Naive thymus-derived CD4-positive, alpha-beta T cell (primary cell): ENCODE measurements at regions of chr19 and their contacts with region 1.

Region 1: DNA sequence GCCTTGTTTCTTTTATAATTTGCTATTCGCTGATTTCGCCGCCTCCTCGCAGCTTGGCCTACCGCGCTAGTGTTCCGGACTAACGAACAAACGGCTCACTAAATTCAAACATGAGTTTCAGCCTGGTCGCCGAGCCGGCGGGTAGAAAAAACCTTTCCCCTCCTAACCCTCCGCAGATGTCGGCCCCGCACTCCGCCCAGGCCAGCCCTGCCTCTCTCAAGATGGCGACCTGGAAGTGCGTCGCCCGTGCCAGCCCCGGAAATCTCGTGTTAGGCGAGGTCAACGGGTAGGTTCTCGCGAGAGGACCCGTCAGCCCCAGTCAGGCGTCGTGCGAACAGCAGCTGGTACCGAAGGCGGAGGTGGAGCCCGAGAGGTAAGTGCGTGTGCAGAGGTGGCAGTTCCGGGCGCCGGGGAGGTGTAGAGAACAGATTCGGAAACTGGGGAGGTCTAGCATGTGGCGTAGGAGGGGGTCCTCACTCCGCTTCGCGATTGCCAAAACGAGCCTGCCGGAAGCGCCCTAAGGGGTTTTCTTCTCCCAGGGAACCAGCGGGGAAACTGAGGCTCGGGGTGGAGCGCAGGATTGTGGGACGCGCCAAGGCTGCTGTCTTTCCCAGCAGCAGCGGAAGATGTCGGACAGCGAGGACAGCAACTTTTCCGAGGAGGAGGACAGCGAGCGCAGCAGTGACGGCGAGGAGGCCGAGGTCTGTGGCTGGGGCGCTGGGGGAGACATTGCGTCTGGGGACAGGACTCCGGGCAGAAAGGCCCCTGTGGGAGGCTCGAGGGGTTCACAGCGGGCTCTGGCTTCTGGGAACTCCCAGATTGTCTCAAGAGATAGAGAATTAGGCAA is at the start of gene SUPT5H:
- DNase-seq: peak; percentile 84 to 99 (median 97)
- ATAC-seq: peak; percentile 96
- H3K4me3 ChIP-seq: peak within 1 kb of the TSS; percentile 77
- H3K4me3 Mint-ChIP-seq: peak within 1 kb of the TSS; percentile 91 to 100 (median 97)
- H3K27ac ChIP-seq: peak within 1 kb of the TSS; percentile 98
- H3K27ac Mint-ChIP-seq: peak within 1 kb of the TSS; percentile 95 to 100 (median 99)
- H3K4me1 ChIP-seq: peaks cover 35 to 47% of the 10 kb centered on the region in 2 donors
- H3K4me1 Mint-ChIP-seq: peaks cover 38 to 61% (median 48%) of the 10 kb centered on the region in 7 donors
- H3K27me3 ChIP-seq: no peaks in the 10 kb centered on the region
- H3K27me3 Mint-ChIP-seq: no peaks in the 10 kb centered on the region
- total RNA-seq, gene SUPT5H: 180 to 247 (median 203) TPM

Region 2: GRCh38 chr19:39319892-39320248 is 125.6 kb before region 1 on chr19:
- CTCF ChIA-PET with region 1: no interaction called
- POLR2A ChIA-PET with region 1: no interaction called
- intact Hi-C with region 1: no loop called
- DNase-seq: no peak
- ATAC-seq: no peak
- H3K4me3 ChIP-seq: peak overlapping the region; percentile 62
- H3K4me3 Mint-ChIP-seq: peak overlapping the region; percentile 67 to 89 (median 80)
- H3K27ac ChIP-seq: peak overlapping the region; percentile 70
- H3K27ac Mint-ChIP-seq: peak overlapping the region in 8 of 9 donors; percentile 48 to 91 (median 66)
- H3K4me1 ChIP-seq: peaks cover 9 to 10% of the 10 kb centered on the region in 2 donors
- H3K4me1 Mint-ChIP-seq: peaks cover 20 to 48% (median 30%) of the 10 kb centered on the region in 7 donors
- H3K27me3 ChIP-seq: no peaks in the 10 kb centered on the region
- H3K27me3 Mint-ChIP-seq: peaks cover 0 to 8% (median 0%) of the 10 kb centered on the region in 5 donors

Region 3: GRCh38 chr19:39412100-39412866 is 33.2 kb before region 1 on chr19 and contains the start of gene PLEKHG2:
- CTCF ChIA-PET with region 1: interaction called, 3 read pairs
- POLR2A ChIA-PET with region 1: interaction called, 12 read pairs
- intact Hi-C with region 1: loop called (anchors 1 kb)
- DNase-seq: peak; percentile 95 to 99 (median 99)
- ATAC-seq: peak; percentile 72
- H3K4me3 ChIP-seq: peak within 1 kb of the TSS; percentile 82
- H3K4me3 Mint-ChIP-seq: peak within 1 kb of the TSS; percentile 84 to 99 (median 92)
- H3K27ac ChIP-seq: peak within 1 kb of the TSS; percentile 100
- H3K27ac Mint-ChIP-seq: peak within 1 kb of the TSS; percentile 90 to 100 (median 97)
- H3K4me1 ChIP-seq: peaks cover 24 to 28% of the 10 kb centered on the region in 2 donors
- H3K4me1 Mint-ChIP-seq: peaks cover 24 to 49% (median 35%) of the 10 kb centered on the region in 7 donors
- H3K27me3 ChIP-seq: no peaks in the 10 kb centered on the region
- H3K27me3 Mint-ChIP-seq: peaks cover 0 to 3% (median 0%) of the 10 kb centered on the region in 5 donors
- total RNA-seq, gene PLEKHG2: 16.4 to 205 (median 58.2) TPM

Region 4: DNA sequence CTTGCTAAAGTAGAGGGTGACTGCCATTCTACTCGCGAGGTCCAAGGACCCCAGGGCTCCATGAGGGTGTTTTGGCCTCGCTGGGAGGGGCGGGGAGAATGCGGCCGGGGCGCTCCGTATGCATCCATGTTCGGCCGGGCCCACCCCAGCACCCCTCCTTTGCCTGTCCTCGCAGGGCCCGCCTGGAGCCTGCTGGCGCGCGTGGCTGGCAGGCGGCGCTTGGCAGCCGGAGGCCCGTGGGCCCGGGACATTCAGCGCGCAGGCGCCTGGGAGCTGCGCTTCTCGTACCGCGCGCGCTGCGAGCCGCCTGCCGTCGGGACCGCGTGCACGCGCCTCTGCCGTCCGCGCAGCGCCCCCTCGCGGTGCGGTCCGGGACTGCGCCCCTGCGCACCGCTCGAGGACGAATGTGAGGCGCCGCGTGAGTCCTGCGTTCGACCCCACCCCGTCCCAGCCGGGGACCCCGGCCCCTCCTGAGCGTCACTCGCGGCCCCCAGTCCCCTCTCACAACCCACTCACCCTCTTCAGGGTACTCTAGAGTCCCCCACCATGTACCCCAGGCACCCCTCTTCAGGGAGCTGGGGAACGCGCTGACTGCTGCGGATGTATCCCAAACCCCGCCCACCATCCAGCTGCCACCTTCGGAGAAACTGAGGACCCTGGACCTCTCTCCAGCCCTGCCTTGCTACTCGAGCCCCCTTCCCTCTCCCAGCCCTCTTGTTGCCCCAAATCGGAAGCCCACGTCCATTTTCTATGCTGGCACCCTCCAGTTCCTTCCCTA is 57.3 kb after region 1 on chr19:
- CTCF ChIA-PET with region 1: interaction called, 5 read pairs
- POLR2A ChIA-PET with region 1: interaction called, 3 read pairs
- intact Hi-C with region 1: loop called (anchors 1 kb)
- DNase-seq: peak; percentile 67 to 88 (median 78)
- ATAC-seq: peak; percentile 94
- H3K4me3 ChIP-seq: no peak overlapping the region
- H3K4me3 Mint-ChIP-seq: peak overlapping the region in 5 of 10 donors; percentile 4 to 48 (median 16)
- H3K27ac ChIP-seq: no peak overlapping the region
- H3K27ac Mint-ChIP-seq: peak overlapping the region in 3 of 9 donors; percentile 48 to 71 (median 66)
- H3K4me1 ChIP-seq: peaks cover 11 to 21% of the 10 kb centered on the region in 2 donors
- H3K4me1 Mint-ChIP-seq: peaks cover 26 to 38% (median 35%) of the 10 kb centered on the region in 7 donors
- H3K27me3 ChIP-seq: peaks cover 12 to 19% of the 10 kb centered on the region in 2 donors
- H3K27me3 Mint-ChIP-seq: peaks cover 55 to 73% (median 62%) of the 10 kb centered on the region in 5 donors

Region 5: DNA sequence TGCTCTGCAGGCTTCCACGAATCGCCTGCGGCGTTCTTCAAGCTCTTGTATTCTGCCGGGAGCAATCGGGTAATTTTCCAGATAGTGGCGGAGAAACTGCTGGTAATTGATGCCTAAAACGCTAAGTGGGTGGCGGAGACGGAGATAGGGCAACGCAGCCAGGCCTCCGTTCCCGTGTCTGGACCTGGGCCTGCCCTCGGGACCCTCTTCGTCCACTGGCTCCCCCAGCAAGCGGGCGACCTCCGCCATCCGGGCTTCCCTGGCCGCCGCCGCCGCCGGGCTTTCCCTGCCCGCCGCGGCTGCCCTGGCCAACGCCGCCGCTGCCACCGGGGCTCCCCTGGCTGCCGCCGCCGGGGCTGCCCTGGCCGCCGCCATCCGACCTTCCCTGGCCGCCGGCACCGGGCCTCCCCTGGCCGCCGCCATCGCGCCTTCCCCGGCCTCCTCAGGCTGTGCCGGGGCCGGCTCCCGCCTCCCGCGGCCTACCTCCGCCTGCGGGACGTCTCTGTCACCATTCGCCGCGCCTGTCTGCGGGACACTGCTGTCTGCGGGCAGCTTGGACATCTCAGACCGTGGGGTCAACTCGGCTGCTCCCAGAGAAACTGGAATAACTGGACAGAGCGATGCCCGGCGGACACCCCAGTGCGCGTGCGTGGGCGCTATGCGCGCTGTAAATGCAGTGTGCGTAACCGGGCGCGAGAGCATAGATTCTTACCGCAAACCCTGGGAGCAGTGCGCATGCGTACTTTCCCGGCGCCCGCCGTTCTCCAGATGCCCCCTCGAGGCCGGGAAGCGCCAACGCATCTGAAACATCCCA is 94.2 kb after region 1 on chr19 and contains the start of gene EID2:
- CTCF ChIA-PET with region 1: interaction called, 24 read pairs
- POLR2A ChIA-PET with region 1: interaction called, 17 read pairs
- intact Hi-C with region 1: loop called in 1 of 2 experiments (anchors 1 kb)
- DNase-seq: peak; percentile 90 to 95 (median 91)
- ATAC-seq: peak; percentile 96
- H3K4me3 ChIP-seq: peak within 1 kb of the TSS; percentile 94
- H3K4me3 Mint-ChIP-seq: peak within 1 kb of the TSS; percentile 95 to 98 (median 97)
- H3K27ac ChIP-seq: peak within 1 kb of the TSS; percentile 98
- H3K27ac Mint-ChIP-seq: peak within 1 kb of the TSS; percentile 94 to 99 (median 98)
- H3K4me1 ChIP-seq: peaks cover 16 to 21% of the 10 kb centered on the region in 2 donors
- H3K4me1 Mint-ChIP-seq: peaks cover 45 to 85% (median 68%) of the 10 kb centered on the region in 7 donors
- H3K27me3 ChIP-seq: no peaks in the 10 kb centered on the region
- H3K27me3 Mint-ChIP-seq: peaks cover 0 to 2% (median 0%) of the 10 kb centered on the region in 5 donors
- total RNA-seq, gene EID2: 12.2 to 29.1 (median 16.1) TPM

Region 6: DNA sequence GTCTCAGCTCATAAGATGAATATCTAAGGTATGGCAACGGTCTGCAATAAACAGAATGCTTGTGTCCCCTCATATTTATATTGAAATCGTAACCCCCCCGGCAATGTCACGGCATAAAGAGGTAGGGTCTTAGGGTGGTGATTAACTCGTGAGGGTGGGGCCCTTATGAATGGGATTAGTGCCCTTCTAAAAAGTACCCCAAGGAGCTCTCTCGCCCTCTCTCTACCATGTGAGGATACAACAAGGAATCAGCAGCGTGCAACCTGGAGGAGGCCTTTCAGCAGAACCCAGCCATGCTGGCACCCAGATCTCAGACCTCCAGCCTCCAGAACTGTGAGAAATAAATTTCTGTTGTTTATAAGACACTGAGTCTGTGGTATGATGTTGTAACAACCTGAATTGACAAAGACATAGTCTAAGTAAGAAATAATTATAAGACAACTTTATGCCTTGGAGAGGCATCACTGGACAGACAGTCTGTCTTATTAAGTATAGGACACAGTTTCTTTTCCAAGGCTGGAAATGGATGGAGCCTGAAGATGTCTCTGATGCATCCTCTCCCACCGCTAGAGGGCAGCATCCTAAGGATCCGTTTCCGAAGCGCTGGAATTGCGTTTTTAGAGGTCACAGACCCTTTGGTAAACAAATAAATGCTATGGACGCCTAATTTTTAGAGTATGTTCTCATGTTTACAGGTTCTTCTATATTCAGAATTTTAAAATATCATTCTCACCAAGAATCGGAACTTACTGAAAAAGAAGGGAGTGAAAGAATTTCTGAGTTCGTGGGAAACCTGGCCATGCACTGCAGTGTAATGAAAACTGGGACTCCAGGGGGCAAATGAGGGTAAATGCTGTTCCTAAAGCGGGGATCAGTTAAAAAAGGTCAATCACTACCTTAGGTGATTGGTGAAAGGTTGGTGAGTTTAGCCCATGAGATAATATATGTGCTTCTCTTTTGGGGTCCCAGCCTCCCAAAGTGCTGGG is 319.9 kb after region 1 on chr19:
- CTCF ChIA-PET with region 1: no interaction called
- POLR2A ChIA-PET with region 1: no interaction called
- intact Hi-C with region 1: loop called in 1 of 2 experiments (anchors 1 kb)
- DNase-seq: peak in 4 of 9 donors; percentile 4 to 33 (median 11)
- ATAC-seq: no peak
- H3K4me3 ChIP-seq: no peak overlapping the region
- H3K4me3 Mint-ChIP-seq: peak overlapping the region in 1 of 10 donors; percentile 14
- H3K27ac ChIP-seq: no peak overlapping the region
- H3K27ac Mint-ChIP-seq: peak overlapping the region in 1 of 9 donors; percentile 14
- H3K4me1 ChIP-seq: no peaks in the 10 kb centered on the region
- H3K4me1 Mint-ChIP-seq: peaks cover 0 to 4% (median 0%) of the 10 kb centered on the region in 7 donors
- H3K27me3 ChIP-seq: no peaks in the 10 kb centered on the region
- H3K27me3 Mint-ChIP-seq: peaks cover 0 to 15% (median 4%) of the 10 kb centered on the region in 5 donors

Region 7: GRCh38 chr19:40348125-40348913 is 902.8 kb after region 1 on chr19 and contains the starts of genes C19orf47 and PLD3:
- CTCF ChIA-PET with region 1: no interaction called
- POLR2A ChIA-PET with region 1: no interaction called
- intact Hi-C with region 1: loop called in 1 of 2 experiments (anchors 1 kb)
- DNase-seq: peak; percentile 92 to 99 (median 97)
- ATAC-seq: peak; percentile 97
- H3K4me3 ChIP-seq: peak within 1 kb of the TSS; percentile 61
- H3K4me3 Mint-ChIP-seq: peak within 1 kb of the TSS; percentile 83 to 99 (median 96)
- H3K27ac ChIP-seq: peak within 1 kb of the TSS; percentile 86
- H3K27ac Mint-ChIP-seq: peak within 1 kb of the TSS; percentile 81 to 98 (median 93)
- H3K4me1 ChIP-seq: peaks cover 7 to 14% of the 10 kb centered on the region in 2 donors
- H3K4me1 Mint-ChIP-seq: peaks cover 20 to 51% (median 44%) of the 10 kb centered on the region in 7 donors
- H3K27me3 ChIP-seq: no peaks in the 10 kb centered on the region
- H3K27me3 Mint-ChIP-seq: peaks cover 0 to 2% (median 0%) of the 10 kb centered on the region in 5 donors
- total RNA-seq, gene C19orf47: 12.6 to 20.3 (median 15.8) TPM
- total RNA-seq, gene PLD3: 75.4 to 137 (median 114) TPM

Region 8: DNA sequence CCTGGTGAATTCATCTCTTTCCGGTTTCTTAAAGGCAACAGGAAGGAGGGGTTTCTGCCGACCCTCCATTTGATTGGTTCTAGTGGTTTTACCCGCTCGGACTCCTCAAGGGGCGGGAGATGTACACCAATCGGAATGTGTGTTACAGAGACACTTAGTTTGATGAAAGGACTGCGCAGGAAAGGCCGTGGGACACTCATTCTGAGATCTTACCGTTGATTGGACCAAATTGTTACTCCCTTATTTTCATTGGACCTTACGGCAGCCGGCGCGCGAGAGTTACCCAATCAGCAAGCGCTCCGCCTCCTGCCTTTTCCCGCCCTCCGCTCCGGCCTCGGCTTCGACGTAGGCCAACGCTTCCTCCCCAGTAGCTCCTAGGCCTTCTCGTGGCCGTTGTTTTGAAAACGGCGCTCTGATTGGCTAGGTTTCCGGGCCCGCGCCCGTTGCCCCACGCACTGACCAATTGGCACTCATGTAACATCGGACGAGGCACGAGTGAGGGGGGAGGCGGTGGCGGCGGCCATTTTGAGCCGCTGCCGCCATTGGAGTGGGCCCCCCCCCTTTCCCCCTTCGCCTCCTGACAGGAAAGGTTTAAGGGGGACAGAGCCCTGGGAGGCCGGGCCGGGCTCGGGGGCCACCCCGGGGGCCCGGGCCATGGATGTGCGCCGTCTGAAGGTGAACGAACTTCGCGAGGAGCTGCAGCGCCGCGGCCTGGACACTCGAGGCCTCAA is 1818.5 kb after region 1 on chr19 and contains the start of gene HNRNPUL1:
- CTCF ChIA-PET with region 1: no interaction called
- POLR2A ChIA-PET with region 1: no interaction called
- intact Hi-C with region 1: no loop called
- DNase-seq: peak; percentile 99 to 100 (median 100)
- ATAC-seq: peak; percentile 76
- H3K4me3 ChIP-seq: peak within 1 kb of the TSS; percentile 84
- H3K4me3 Mint-ChIP-seq: peak within 1 kb of the TSS; percentile 95 to 100 (median 98)
- H3K27ac ChIP-seq: peak within 1 kb of the TSS; percentile 99
- H3K27ac Mint-ChIP-seq: peak within 1 kb of the TSS; percentile 99 to 100 (median 100)
- H3K4me1 ChIP-seq: peaks cover 22 to 30% of the 10 kb centered on the region in 2 donors
- H3K4me1 Mint-ChIP-seq: peaks cover 33 to 61% (median 41%) of the 10 kb centered on the region in 7 donors
- H3K27me3 ChIP-seq: no peaks in the 10 kb centered on the region
- H3K27me3 Mint-ChIP-seq: peaks cover 0 to 8% (median 0%) of the 10 kb centered on the region in 5 donors
- total RNA-seq, gene HNRNPUL1: 253 to 319 (median 280) TPM